CD4-positive, alpha-beta T cell (primary cell): ENCODE measurements at regions of chr12 and their contacts with region 1.

Region 1: DNA sequence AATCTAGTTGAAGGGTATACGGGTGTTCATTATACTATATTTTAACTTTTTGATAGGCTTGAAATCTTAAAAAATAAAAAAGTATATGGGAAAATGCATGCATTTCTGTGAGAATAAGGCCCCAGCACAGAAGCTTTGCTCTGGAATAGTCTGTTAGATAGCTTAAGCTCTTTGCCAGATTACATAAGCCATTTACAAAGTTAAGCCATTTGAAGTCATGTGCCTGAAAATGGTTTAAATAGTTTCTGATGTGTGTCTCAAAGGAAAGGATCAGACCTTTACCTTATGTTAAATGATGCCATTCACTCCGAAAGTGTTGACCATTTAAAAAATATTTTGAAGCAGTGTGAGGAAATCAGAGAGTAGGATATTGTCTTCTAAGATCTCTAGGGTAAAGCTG is 51.3 kb downstream of the WASHC4 start:
- DNase-seq: no peak
- ATAC-seq: no peak
- H3K4me3 ChIP-seq: no peak overlapping the region
- H3K4me3 Mint-ChIP-seq: no peak overlapping the region
- H3K27ac ChIP-seq: no peak overlapping the region
- H3K27ac Mint-ChIP-seq: no peak overlapping the region
- H3K4me1 ChIP-seq: no peaks in the 10 kb centered on the region
- H3K4me1 Mint-ChIP-seq: no peaks in the 10 kb centered on the region
- H3K27me3 ChIP-seq: no peaks in the 10 kb centered on the region
- H3K27me3 Mint-ChIP-seq: no peaks in the 10 kb centered on the region
- CTCF ChIP-seq: no peak

Region 2: DNA sequence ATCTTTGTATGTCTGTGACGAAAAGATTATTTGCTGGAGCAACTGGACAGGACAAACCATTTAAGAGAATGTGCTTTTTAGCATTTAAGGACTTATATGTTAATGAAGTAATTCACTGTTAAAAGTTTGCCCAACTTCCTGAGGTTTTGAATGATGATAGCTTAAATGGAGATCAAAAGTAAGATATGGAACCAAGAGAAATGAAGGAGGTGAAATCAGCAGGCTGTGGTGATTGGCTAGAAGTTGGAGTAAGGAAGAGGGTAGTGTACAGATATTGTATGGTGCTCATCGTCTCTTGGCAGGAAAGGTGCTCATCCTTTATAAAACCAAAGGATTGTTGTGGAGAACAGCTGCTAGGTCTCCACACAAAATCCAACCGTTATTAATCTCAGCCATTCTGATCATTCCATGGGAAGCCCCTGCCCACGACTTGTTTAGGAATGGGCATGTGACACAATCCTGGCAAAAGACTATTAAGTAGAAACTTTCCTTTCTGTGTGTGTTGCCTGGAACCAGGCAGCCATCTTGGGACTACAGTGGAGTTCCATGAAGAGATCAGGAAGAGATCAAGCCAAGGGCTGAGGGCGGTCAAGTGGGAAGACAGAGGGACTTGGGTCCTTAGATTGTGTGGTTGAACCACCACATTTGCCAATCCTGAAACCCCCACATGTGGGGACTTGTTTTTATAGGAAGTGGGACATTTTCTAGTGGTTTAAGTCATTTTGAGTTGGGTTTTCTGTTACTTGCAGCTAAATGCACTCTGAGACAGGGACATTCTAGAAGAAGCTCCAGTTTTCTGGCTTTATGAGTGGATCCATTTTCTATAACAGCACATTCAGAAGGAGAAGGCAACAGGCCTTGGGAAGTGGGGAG is 758.9 kb before region 1 on chr12:
- CTCF ChIA-PET with region 1: no interaction called
- POLR2A ChIA-PET with region 1: no interaction called
- intact Hi-C with region 1: no loop called
- DNase-seq: no peak
- ATAC-seq: no peak
- H3K4me3 ChIP-seq: no peak overlapping the region
- H3K4me3 Mint-ChIP-seq: no peak overlapping the region
- H3K27ac ChIP-seq: no peak overlapping the region
- H3K27ac Mint-ChIP-seq: no peak overlapping the region
- H3K4me1 ChIP-seq: no peaks in the 10 kb centered on the region
- H3K4me1 Mint-ChIP-seq: no peaks in the 10 kb centered on the region
- H3K27me3 ChIP-seq: no peaks in the 10 kb centered on the region
- H3K27me3 Mint-ChIP-seq: no peaks in the 10 kb centered on the region
- CTCF ChIP-seq: no peak

Region 3: DNA sequence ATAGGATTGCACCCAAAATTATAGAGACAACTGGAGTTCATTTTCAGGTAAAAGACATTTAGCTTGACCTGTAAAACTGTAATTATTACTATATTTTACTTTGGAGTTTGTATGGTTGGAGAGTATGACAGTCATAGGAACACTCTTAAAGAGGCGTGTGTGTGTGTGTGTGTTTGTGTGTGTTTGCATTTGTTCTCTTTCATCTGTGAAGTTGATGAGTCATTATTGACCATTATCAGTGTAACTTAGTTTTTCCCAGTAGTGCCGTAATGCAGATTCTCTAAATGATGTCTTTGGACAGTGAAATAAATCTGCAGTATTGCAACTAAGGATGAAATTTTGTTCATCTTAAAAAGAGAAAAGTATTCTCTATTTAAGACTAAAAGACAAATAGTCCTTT is 38.3 kb before region 1 on chr12:
- CTCF ChIA-PET with region 1: no interaction called
- POLR2A ChIA-PET with region 1: interaction called, 3 read pairs
- intact Hi-C with region 1: loop called in 1 of 2 experiments (anchors 5 kb)
- DNase-seq: no peak
- ATAC-seq: no peak
- H3K4me3 ChIP-seq: no peak overlapping the region
- H3K4me3 Mint-ChIP-seq: no peak overlapping the region
- H3K27ac ChIP-seq: no peak overlapping the region
- H3K27ac Mint-ChIP-seq: no peak overlapping the region
- H3K4me1 ChIP-seq: no peaks in the 10 kb centered on the region
- H3K4me1 Mint-ChIP-seq: peaks cover 6% of the 10 kb centered on the region
- H3K27me3 ChIP-seq: no peaks in the 10 kb centered on the region
- H3K27me3 Mint-ChIP-seq: no peaks in the 10 kb centered on the region
- CTCF ChIP-seq: no peak

Region 4: GRCh38 chr12:105253882-105254513 is 95.1 kb after region 1 on chr12:
- CTCF ChIA-PET with region 1: no interaction called
- POLR2A ChIA-PET with region 1: no interaction called
- intact Hi-C with region 1: no loop called
- DNase-seq: no peak
- ATAC-seq: no peak
- H3K4me3 ChIP-seq: no peak overlapping the region
- H3K4me3 Mint-ChIP-seq: no peak overlapping the region
- H3K27ac ChIP-seq: no peak overlapping the region
- H3K27ac Mint-ChIP-seq: no peak overlapping the region
- H3K4me1 ChIP-seq: no peaks in the 10 kb centered on the region
- H3K4me1 Mint-ChIP-seq: peaks cover 5% of the 10 kb centered on the region
- H3K27me3 ChIP-seq: no peaks in the 10 kb centered on the region
- H3K27me3 Mint-ChIP-seq: no peaks in the 10 kb centered on the region
- CTCF ChIP-seq: no peak

Region 5: GRCh38 chr12:106417926-106418910 is 1259.3 kb after region 1 on chr12:
- CTCF ChIA-PET with region 1: no interaction called
- POLR2A ChIA-PET with region 1: no interaction called
- intact Hi-C with region 1: no loop called
- DNase-seq: no peak
- ATAC-seq: no peak
- H3K4me3 ChIP-seq: no peak overlapping the region
- H3K4me3 Mint-ChIP-seq: no peak overlapping the region
- H3K27ac ChIP-seq: no peak overlapping the region
- H3K27ac Mint-ChIP-seq: no peak overlapping the region
- H3K4me1 ChIP-seq: no peaks in the 10 kb centered on the region
- H3K4me1 Mint-ChIP-seq: no peaks in the 10 kb centered on the region
- H3K27me3 ChIP-seq: no peaks in the 10 kb centered on the region
- H3K27me3 Mint-ChIP-seq: no peaks in the 10 kb centered on the region
- CTCF ChIP-seq: no peak